OCI-LY7 (cell line): ENCODE measurements at regions of chr3 and their contacts with region 1.

Region 1: GRCh38 chr3:196609343-196609775 is 30.1 kb upstream of the NRROS start:
- DNase-seq: peak; percentile 92
- H3K4me3 ChIP-seq: no peak overlapping the region
- H3K27ac ChIP-seq: no peak overlapping the region
- H3K4me1 ChIP-seq: peaks cover 12% of the 10 kb centered on the region
- CTCF ChIP-seq: peak; percentile 100

Region 2: GRCh38 chr3:195522254-195523023 is 1086.9 kb before region 1 on chr3:
- CTCF ChIA-PET with region 1: no interaction called
- POLR2A ChIA-PET with region 1: no interaction called
- intact Hi-C with region 1: no loop called
- DNase-seq: peak; percentile 60
- H3K4me3 ChIP-seq: no peak overlapping the region
- H3K27ac ChIP-seq: peak overlapping the region; percentile 24
- H3K4me1 ChIP-seq: peaks cover 15% of the 10 kb centered on the region
- CTCF ChIP-seq: peak; percentile 99

Region 3: DNA sequence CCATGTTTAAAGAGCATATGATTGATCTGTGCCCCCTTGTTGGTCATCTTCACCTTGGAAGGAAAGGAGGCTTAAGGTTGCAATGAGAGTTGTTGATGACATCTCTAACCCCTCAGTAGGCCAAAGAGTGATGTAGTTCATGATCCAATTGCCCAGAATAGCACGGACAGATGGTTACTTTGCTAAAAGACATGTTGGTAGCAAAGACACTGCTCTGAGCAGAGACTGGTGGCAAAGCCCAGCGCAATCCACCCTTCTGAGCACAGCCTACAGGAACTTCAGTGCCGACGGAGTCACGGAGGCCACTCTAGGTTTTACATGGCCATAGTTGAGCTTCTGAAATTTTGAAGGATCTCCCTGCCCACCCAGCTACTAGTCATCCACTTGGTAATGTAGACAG is 19.1 kb before region 1 on chr3:
- CTCF ChIA-PET with region 1: no interaction called
- POLR2A ChIA-PET with region 1: no interaction called
- intact Hi-C with region 1: no loop called
- DNase-seq: no peak
- H3K4me3 ChIP-seq: no peak overlapping the region
- H3K27ac ChIP-seq: no peak overlapping the region
- H3K4me1 ChIP-seq: no peaks in the 10 kb centered on the region
- CTCF ChIP-seq: no peak

Region 4: DNA sequence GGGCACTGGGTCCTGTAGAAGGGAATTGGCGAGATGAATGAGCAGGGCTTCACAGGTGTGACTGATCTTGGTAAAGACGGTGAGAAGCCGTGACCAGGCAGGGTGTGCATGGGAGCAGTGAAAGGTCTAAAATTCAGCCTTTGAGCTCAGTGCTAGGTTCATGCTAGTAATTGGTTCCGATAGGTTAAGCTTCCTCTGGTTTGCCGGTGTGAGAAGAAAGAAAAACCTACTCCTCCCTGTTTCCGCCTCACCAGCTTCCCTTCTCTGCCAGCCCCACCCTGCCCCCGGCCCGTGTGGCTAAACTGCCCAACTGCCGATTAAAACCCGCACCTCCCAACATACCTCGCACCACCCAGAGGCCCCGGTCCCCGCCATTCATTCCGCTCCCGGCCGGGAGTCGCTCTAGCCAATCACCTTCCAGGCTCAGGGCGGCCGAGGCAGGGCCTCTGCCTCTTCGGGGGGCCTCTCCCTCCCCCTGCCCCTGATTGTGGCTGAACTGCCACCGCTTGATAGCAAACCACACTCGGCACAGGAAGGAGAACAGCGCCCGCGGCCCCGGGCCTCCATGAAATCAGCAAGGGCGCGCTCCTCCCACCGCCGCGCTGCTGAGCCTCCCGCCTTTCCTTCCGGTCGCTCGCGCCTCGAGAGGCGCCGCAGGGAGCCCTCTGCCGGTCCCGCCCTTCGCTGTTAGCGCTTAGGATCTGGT is 22.8 kb after region 1 on chr3:
- CTCF ChIA-PET with region 1: interaction called, 4 read pairs
- POLR2A ChIA-PET with region 1: interaction called, 9 read pairs
- intact Hi-C with region 1: loop called (anchors 1 kb)
- DNase-seq: peak; percentile 90
- H3K4me3 ChIP-seq: peak overlapping the region; percentile 68
- H3K27ac ChIP-seq: peak overlapping the region; percentile 70
- H3K4me1 ChIP-seq: peaks cover 34% of the 10 kb centered on the region
- CTCF ChIP-seq: peak; percentile 35; the same call in 1 of the 2 replicates

Region 5: DNA sequence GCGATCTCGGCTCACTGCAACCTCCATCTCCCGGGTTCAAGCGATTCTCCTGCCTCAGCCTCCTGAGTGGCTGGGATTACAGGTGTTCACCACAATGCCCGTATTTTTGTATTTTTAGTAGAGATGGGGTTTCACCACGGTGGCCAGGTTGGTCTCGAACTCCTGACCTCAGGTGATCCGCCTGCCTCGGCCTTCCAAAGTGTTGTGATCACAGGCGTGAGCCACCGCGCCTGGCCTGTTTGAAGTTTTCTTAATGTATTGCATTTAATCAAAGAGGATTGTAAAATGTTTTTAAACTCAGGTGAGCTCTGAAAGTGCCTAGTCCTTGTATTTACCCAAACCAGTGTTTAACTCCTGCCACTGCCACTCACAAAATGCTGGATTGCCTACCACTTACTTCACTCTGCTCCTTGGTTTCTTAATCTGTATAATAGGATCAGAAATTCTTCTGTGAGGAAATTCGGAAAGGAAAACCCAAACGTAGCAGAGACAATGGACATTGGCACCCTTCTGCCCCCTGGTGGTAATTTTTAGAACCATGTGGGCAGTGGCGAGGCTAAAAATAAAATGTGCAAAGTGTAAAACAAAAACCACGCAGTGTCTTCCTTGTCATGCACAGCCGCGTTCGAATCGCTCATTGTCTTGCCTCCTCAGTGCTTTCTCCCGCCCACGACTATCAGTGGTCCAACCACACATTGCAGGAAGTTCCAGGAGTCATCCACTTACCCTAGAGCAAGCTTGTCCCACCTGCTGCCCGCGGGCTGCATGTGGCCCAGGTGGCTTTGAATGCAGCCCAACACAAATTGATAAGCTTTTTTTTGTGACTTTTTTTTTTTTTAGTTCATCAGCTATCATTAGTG is 75.4 kb after region 1 on chr3:
- CTCF ChIA-PET with region 1: interaction called, 13 read pairs
- POLR2A ChIA-PET with region 1: interaction called, 6 read pairs
- intact Hi-C with region 1: loop called (anchors 1 kb)
- DNase-seq: peak; percentile 80
- H3K4me3 ChIP-seq: peak overlapping the region; percentile 18
- H3K27ac ChIP-seq: no peak overlapping the region
- H3K4me1 ChIP-seq: peaks cover 10% of the 10 kb centered on the region
- CTCF ChIP-seq: peak; percentile 96

Region 6: GRCh38 chr3:196837819-196838420 is 228.6 kb after region 1 on chr3:
- CTCF ChIA-PET with region 1: no interaction called
- POLR2A ChIA-PET with region 1: no interaction called
- intact Hi-C with region 1: loop called (anchors 10 kb)
- DNase-seq: peak; percentile 74
- H3K4me3 ChIP-seq: no peak overlapping the region
- H3K27ac ChIP-seq: no peak overlapping the region
- H3K4me1 ChIP-seq: no peaks in the 10 kb centered on the region
- CTCF ChIP-seq: peak; percentile 93

Region 7: GRCh38 chr3:196942226-196942914 is 333.0 kb after region 1 on chr3 and contains the start of gene NCBP2:
- CTCF ChIA-PET with region 1: interaction called, 3 read pairs
- POLR2A ChIA-PET with region 1: no interaction called
- intact Hi-C with region 1: loop called (anchors 1 kb)
- DNase-seq: peak; percentile 99
- H3K4me3 ChIP-seq: peak within 1 kb of the TSS; percentile 90
- H3K27ac ChIP-seq: peak within 1 kb of the TSS; percentile 83
- H3K4me1 ChIP-seq: peaks cover 23% of the 10 kb centered on the region
- CTCF ChIP-seq: peak; percentile 75
- total RNA-seq, gene NCBP2: 46.4 and 66.7 TPM in 2 replicates

Region 8: DNA sequence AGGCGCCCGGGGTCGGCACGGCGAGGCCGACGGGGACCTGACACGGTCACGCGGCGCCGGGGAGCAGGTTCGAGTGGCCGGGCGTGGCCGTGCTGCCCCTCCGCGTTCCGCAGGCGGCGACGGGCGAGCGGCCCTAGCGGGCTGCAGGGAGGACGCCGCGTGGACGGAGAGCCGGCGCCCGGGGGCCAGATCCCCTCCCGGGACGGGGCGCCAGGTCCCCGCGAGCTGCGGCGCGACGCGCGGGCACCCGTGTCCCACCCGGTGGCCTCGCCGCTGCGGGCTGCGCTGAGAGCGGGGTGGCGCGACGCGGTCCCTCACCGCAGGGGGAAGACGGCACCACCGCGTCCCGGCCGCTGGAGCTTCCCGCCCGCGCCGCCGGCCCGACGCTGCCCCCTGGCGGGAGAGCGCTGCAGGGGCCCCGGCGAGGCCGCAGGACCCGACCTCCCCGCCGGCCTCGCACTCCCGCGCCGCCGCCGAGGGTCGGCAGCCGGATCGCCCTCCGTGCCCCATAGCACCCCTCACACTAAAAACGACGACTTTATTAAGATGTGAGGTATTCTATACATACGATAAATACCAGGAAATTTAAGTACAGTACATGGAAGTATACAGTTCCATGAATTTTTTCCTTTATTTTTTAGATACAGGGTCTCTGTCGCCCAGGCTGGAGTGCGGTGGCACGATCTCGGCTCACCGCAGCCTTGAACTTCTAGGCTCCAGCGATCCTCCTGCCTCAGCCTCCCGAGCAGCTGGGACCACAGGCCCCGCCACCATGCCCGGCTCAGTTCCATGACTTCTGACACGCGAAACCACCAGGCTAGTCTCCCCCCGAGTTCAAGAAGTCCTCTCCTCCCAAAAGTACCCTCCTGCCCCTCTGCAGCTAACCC is 360.5 kb after region 1 on chr3:
- CTCF ChIA-PET with region 1: no interaction called
- POLR2A ChIA-PET with region 1: no interaction called
- intact Hi-C with region 1: loop called (anchors 1 kb)
- DNase-seq: peak; percentile 73
- H3K4me3 ChIP-seq: peak overlapping the region; percentile 72
- H3K27ac ChIP-seq: no peak overlapping the region
- H3K4me1 ChIP-seq: peaks cover 8% of the 10 kb centered on the region
- CTCF ChIP-seq: peak; percentile 77